PC-3 (cell line): ENCODE measurements at regions of chr15 and their contacts with region 1.

Region 1: GRCh38 chr15:52331490-52332240 is 36.1 kb upstream of the MYO5C start:
- DNase-seq: peak; percentile 92
- ATAC-seq: peak; percentile 85
- H3K4me3 ChIP-seq: no peak overlapping the region
- H3K27ac ChIP-seq: peak overlapping the region; percentile 87
- H3K4me1 ChIP-seq: peaks cover 49% of the 10 kb centered on the region
- H3K27me3 ChIP-seq: no peaks in the 10 kb centered on the region
- CTCF ChIP-seq: peak; percentile 74

Region 2: DNA sequence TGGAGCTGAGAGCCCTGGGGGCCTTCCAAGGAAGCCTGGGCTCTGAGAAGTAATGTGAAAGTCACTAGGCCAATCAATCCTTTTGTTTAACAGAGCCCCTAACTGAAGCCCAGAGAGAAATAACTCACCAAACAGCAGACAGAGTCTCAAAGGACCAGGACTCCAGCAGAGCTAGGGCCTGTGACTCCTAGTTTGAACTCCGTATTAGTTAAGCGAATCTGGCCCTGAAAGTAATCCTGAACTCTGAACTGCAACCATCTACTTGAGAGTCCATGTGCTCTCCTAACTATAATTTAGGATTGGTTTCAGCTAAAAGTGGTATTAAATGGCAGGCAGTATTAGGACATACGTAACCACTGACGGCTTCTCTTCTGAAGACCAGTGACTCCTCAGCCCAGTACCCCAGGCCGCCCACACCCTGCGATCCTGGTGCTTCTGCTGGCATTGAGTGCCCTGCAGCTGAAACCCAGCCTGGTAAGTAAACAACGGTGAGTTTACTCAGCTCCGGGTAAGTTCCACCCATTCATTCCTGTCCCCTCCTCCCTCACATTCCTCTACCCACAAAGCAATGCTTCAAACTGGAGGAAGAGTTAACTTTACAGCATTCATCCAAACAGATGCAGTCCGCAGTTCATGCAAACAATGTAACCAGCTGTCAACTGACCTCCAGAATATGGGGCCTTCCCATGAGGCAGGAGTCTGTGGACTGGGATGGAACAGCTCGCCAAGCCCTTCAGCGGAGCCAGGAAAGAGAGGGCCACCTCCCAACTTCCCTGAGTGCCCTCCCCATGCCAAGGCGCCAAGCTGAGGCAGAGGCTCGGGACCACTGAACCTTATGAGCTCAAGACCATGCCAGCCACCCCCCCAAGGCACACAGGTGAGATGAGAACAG is 43.4 kb before region 1 on chr15:
- CTCF ChIA-PET with region 1: no interaction called
- POLR2A ChIA-PET with region 1: no interaction called
- intact Hi-C with region 1: loop called (anchors 2 kb)
- DNase-seq: peak; percentile 93
- ATAC-seq: peak; percentile 91
- H3K4me3 ChIP-seq: peak overlapping the region; percentile 30; the same call in 1 of the 2 replicates
- H3K27ac ChIP-seq: peak overlapping the region; percentile 98
- H3K4me1 ChIP-seq: peaks cover 44% of the 10 kb centered on the region
- H3K27me3 ChIP-seq: no peaks in the 10 kb centered on the region
- CTCF ChIP-seq: no peak

Region 3: GRCh38 chr15:52406601-52407000 is 74.9 kb after region 1 on chr15:
- CTCF ChIA-PET with region 1: no interaction called
- POLR2A ChIA-PET with region 1: no interaction called
- intact Hi-C with region 1: no loop called
- DNase-seq: no peak
- ATAC-seq: no peak
- H3K4me3 ChIP-seq: no peak overlapping the region
- H3K27ac ChIP-seq: no peak overlapping the region
- H3K4me1 ChIP-seq: peaks cover 12% of the 10 kb centered on the region
- H3K27me3 ChIP-seq: no peaks in the 10 kb centered on the region
- CTCF ChIP-seq: no peak

Region 4: GRCh38 chr15:52463638-52464037 is 132.0 kb after region 1 on chr15:
- CTCF ChIA-PET with region 1: interaction called, 8 read pairs
- POLR2A ChIA-PET with region 1: no interaction called
- intact Hi-C with region 1: loop called (anchors 1 kb)
- DNase-seq: peak; percentile 19
- ATAC-seq: peak; percentile 55
- H3K4me3 ChIP-seq: no peak overlapping the region
- H3K27ac ChIP-seq: no peak overlapping the region; the same call in 1 of the 2 replicates
- H3K4me1 ChIP-seq: peaks cover 10% of the 10 kb centered on the region; the same call in 1 of the 2 replicates
- H3K27me3 ChIP-seq: no peaks in the 10 kb centered on the region
- CTCF ChIP-seq: peak; percentile 43; the same call in 1 of the 2 replicates

Region 5: GRCh38 chr15:52568601-52569256 is 237.1 kb after region 1 on chr15 and contains the start of gene ARPP19:
- CTCF ChIA-PET with region 1: no interaction called
- POLR2A ChIA-PET with region 1: no interaction called
- intact Hi-C with region 1: loop called (anchors 1 kb)
- DNase-seq: peak; percentile 87
- ATAC-seq: peak; percentile 91
- H3K4me3 ChIP-seq: peak within 1 kb of the TSS; percentile 90
- H3K27ac ChIP-seq: peak within 1 kb of the TSS; percentile 95
- H3K4me1 ChIP-seq: peaks cover 6% of the 10 kb centered on the region; the same call in 1 of the 2 replicates
- H3K27me3 ChIP-seq: no peaks in the 10 kb centered on the region
- CTCF ChIP-seq: no peak
- total RNA-seq, gene ARPP19: 54.4 and 65.8 TPM in 2 replicates

Region 6: DNA sequence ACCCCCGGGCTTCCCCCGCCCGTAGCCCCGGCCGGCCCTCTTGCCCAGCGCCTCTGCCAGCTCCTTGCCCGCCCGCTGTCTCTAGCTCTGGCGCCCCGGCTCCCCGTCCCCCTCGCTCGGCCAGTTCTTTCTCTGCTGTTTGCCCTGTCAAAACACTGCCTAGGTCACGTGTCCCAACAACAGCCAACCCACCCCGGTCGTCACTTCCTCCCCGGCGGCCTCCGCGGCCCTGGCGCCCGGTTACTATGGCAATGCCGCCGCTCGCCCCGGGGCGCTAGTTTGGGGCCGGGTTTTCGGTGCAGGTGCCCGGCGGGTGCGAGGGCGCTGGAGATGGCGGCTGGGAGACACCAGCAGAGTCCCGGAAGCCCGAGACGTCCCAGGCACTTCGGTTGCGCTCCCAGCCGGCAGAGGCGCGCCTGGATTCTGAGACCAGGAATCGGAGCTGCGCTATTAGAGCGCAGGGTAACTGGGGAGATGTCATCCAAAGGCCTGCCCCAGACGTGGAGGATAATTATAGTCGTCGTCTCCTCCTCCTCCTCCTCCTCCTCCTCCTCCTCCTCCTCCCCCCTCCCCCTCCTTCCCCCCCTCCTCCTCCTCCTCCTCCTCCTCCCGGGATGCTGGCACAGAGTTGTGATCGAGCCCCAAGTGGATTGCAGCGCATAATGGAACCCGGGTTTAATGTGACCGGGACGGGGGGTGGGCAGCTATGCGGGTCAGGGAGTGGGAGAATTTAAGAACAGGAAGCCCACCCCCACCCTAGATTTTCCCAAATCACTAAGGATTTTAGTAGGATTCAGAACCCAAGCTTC is 347.8 kb after region 1 on chr15 and contains the start of gene ATOSA:
- CTCF ChIA-PET with region 1: interaction called, 3 read pairs
- POLR2A ChIA-PET with region 1: no interaction called
- intact Hi-C with region 1: loop called (anchors 2 kb)
- DNase-seq: peak; percentile 73
- ATAC-seq: peak; percentile 78
- H3K4me3 ChIP-seq: peak within 1 kb of the TSS; percentile 80
- H3K27ac ChIP-seq: peak within 1 kb of the TSS; percentile 73
- H3K4me1 ChIP-seq: peaks cover 19% of the 10 kb centered on the region; the same call in 1 of the 2 replicates
- H3K27me3 ChIP-seq: no peaks in the 10 kb centered on the region
- CTCF ChIP-seq: no peak
- total RNA-seq, gene ATOSA: 6.5 and 8.7 TPM in 2 replicates